ENCODE measurements at regions of chr5 and their contacts with region 1.

Region 1: DNA sequence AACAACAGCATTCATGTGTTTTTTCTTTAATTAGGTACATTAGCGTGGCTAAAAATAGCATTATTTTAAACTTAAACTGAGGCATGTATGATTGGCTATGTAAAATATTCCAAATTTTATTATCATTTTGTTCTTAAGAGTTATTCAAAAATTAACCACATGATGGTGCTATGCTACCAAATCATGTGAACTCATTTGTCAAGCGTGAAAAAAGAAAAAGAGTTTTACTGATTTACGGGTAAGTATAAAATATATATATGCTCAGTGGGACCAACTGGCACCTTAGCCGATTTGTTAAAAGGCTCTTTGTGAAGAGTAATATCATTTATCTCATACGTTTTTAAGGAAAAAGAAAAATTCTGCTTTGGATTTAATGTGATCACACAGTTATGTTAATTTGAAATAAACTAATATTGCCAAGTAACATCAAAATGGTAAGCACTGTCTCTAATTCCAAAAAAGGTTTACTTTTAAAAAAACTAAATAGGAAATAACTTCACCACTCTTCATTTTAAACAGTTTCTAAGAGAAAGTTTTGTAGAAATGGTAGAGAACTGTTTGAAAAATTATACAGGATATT is 1042.3 kb downstream of the CDH12 start:
- DNase-seq: no peak
- ATAC-seq: no peak
- H3K4me3 ChIP-seq: no peak overlapping the region
- H3K27ac ChIP-seq: no peak overlapping the region
- H3K4me1 ChIP-seq: no peaks in the 10 kb centered on the region
- H3K27me3 ChIP-seq: no peaks in the 10 kb centered on the region
- CTCF ChIP-seq: peak; percentile 17 to 48 (median 19); a peak in 3 of 6 replicates
- EP300 ChIP-seq: no peak
- POLR2A ChIP-seq: no peak
- RAD21 ChIP-seq: peak; percentile 69

Region 2: DNA sequence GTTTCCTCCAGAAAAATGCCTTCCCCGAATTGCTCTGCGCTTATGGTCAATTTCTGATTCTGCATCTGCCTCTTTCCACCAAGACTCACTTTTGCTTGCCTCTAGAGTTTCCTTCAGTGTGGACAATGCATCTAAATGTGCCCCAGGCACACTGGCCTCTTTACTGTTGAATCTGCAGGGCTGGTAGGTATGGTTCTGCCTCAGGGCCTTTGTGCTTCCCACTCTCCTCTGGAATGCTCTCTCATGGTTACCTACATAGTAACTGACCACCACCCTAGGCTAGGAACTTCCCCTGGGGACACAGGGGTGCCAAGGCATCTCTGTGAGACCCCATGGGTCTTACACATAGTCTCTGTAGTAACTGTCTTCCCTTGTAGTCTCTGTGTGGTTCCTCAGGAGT is 216.3 kb before region 1 on chr5:
- CTCF ChIA-PET with region 1: no interaction called
- POLR2A ChIA-PET with region 1: no interaction called
- RAD21 ChIA-PET with region 1: no interaction called
- SMC1A ChIA-PET with region 1: no interaction called
- in situ Hi-C with region 1: no loop called
- intact Hi-C with region 1: no loop called
- DNase-seq: no peak
- ATAC-seq: no peak
- H3K4me3 ChIP-seq: no peak overlapping the region
- H3K27ac ChIP-seq: no peak overlapping the region
- H3K4me1 ChIP-seq: no peaks in the 10 kb centered on the region
- H3K27me3 ChIP-seq: no peaks in the 10 kb centered on the region
- CTCF ChIP-seq: no peak
- EP300 ChIP-seq: no peak
- POLR2A ChIP-seq: no peak
- RAD21 ChIP-seq: no peak

Region 3: DNA sequence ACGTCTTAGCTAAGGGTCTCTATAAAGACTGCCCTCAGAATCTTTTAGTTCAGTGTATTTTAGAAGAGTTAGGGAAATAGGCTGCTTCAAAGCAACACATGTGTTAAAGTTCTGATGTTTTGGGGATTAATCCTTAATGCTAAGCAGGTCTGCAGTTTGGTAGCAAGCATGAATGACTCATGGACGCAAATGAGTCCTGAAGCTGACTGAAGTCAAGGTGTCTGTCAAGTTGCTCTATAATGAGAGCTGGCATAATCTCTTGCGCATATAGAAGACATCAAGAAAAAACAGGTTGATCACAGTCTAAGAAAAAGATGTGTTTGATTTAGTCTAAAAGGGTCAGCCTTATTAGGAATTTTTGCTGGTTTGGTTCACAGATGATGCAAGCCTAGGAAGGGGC is 412.3 kb after region 1 on chr5:
- CTCF ChIA-PET with region 1: interaction called, 3 read pairs
- POLR2A ChIA-PET with region 1: no interaction called
- RAD21 ChIA-PET with region 1: no interaction called
- SMC1A ChIA-PET with region 1: no interaction called
- in situ Hi-C with region 1: no loop called
- intact Hi-C with region 1: loop called (anchors 10 kb)
- DNase-seq: no peak
- ATAC-seq: no peak
- H3K4me3 ChIP-seq: no peak overlapping the region
- H3K27ac ChIP-seq: no peak overlapping the region
- H3K4me1 ChIP-seq: no peaks in the 10 kb centered on the region
- H3K27me3 ChIP-seq: no peaks in the 10 kb centered on the region
- CTCF ChIP-seq: no peak
- EP300 ChIP-seq: no peak
- POLR2A ChIP-seq: no peak
- RAD21 ChIP-seq: no peak